ENCODE measurements at regions of chr6 and their contacts with region 1.

Region 1: DNA sequence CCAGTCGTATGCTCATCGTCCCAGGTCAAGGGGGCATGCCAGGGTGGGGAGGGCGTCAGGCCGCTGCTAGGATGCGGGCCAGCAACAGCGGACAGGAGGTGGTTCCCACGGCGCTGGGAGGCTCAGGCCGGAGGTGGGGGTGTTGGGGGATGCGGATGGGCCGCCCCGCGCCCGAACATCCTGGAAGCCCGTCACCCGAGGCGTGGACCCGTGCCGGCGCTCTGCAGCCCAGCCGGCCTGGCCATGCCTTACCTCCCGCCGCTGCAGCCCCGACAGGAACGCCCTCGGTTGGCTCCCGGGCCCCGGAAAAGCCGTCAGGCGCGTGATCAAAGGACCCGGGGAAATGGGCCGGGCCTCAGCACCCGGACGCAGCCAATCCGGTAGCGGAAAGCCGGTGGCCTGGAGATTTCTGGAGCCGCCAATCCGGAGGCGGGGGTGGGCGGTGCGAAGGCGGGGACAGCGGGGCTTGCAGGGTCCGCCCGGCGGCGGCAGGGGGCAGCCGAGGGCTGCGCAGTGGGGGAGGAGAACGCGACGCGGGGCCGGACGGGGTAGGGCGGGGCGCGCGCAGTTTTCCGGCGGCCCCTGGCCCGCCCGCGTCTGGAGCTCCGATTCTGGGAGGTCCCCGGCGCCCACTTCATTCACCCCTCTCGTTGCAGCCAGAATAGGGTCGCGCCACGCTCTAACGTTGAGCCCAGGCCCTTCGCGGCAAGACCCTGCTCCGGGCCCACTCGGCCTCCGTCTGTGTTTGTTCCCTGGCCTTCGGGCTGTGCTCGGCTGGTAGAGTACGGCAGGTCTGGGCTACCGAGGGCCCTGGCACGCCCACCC is at the start of gene SMIM29:
- DNase-seq: peak; percentile 96
- H3K4me3 Mint-ChIP-seq: peak within 1 kb of the TSS; percentile 87
- H3K27ac Mint-ChIP-seq: peak within 1 kb of the TSS; percentile 87
- H3K4me1 Mint-ChIP-seq: peaks cover 40% of the 10 kb centered on the region
- H3K27me3 Mint-ChIP-seq: peaks cover 1% of the 10 kb centered on the region
- total RNA-seq, gene SMIM29: 14.3 and 15.0 TPM in 2 replicates

Region 2: DNA sequence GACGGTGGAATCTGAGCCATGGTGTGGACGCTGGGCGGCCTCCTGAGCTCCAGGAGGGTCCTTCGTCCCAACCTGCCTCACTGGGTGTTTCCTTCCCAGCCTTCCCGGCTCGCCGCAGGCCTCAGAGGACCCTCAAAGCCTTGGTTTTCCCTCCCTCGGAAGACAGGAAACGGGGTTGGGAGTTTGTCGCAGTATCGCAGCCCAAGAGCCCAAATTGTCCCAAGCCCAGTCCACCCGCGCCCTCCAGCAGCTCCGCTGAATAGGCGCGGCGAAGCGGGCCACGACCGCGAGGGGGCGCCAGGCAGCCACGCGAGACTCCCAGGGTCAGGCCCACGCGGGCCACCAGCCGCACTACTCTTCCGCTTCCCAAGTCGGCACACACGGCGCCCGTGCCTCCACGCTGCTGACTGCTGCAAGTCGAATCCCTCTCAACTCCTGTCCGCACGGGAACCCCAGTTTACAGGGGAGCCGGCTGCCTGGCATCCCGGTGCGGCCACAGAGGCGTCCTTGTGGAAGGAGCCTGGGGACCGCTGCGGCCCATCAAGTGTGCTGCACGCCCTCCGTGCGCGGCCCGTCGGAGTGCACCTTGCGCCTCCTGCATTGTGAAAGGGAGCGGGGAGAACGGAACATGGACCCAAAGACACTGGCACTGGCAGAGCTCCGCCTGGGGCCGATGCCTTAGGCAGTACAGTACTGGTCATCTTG is 52.7 kb before region 1 on chr6:
- intact Hi-C with region 1: loop called (anchors 1 kb)
- DNase-seq: peak; percentile 83
- H3K4me3 Mint-ChIP-seq: peak overlapping the region; percentile 79
- H3K27ac Mint-ChIP-seq: peak overlapping the region; percentile 70
- H3K4me1 Mint-ChIP-seq: peaks cover 5% of the 10 kb centered on the region
- H3K27me3 Mint-ChIP-seq: peaks cover 10% of the 10 kb centered on the region

Region 3: GRCh38 chr6:34236131-34236996 is 12.6 kb before region 1 on chr6 and contains the start of gene HMGA1:
- intact Hi-C with region 1: loop called (anchors 1 kb)
- DNase-seq: peak; percentile 83
- H3K4me3 Mint-ChIP-seq: peak within 1 kb of the TSS; percentile 86
- H3K27ac Mint-ChIP-seq: peak within 1 kb of the TSS; percentile 92
- H3K4me1 Mint-ChIP-seq: peaks cover 43% of the 10 kb centered on the region
- H3K27me3 Mint-ChIP-seq: no peaks in the 10 kb centered on the region
- total RNA-seq, gene HMGA1: 415 and 438 TPM in 2 replicates

Region 4: GRCh38 chr6:34392497-34393190 is 143.7 kb after region 1 on chr6 and contains the start of gene NUDT3:
- intact Hi-C with region 1: loop called (anchors 1 kb)
- DNase-seq: peak; percentile 93
- H3K4me3 Mint-ChIP-seq: peak within 1 kb of the TSS; percentile 97
- H3K27ac Mint-ChIP-seq: peak within 1 kb of the TSS; percentile 88
- H3K4me1 Mint-ChIP-seq: peaks cover 18% of the 10 kb centered on the region
- H3K27me3 Mint-ChIP-seq: peaks cover 3% of the 10 kb centered on the region
- total RNA-seq, gene NUDT3: 20.0 and 20.8 TPM in 2 replicates

Region 5: GRCh38 chr6:34425498-34426410 is 176.8 kb after region 1 on chr6 and contains the start of gene RPS10:
- intact Hi-C with region 1: loop called (anchors 1 kb)
- DNase-seq: peak; percentile 88
- H3K4me3 Mint-ChIP-seq: peak within 1 kb of the TSS; percentile 99
- H3K27ac Mint-ChIP-seq: peak within 1 kb of the TSS; percentile 99
- H3K4me1 Mint-ChIP-seq: peaks cover 31% of the 10 kb centered on the region
- H3K27me3 Mint-ChIP-seq: peaks cover 4% of the 10 kb centered on the region
- total RNA-seq, gene RPS10: 1,492 and 1,525 TPM in 2 replicates

Region 6: DNA sequence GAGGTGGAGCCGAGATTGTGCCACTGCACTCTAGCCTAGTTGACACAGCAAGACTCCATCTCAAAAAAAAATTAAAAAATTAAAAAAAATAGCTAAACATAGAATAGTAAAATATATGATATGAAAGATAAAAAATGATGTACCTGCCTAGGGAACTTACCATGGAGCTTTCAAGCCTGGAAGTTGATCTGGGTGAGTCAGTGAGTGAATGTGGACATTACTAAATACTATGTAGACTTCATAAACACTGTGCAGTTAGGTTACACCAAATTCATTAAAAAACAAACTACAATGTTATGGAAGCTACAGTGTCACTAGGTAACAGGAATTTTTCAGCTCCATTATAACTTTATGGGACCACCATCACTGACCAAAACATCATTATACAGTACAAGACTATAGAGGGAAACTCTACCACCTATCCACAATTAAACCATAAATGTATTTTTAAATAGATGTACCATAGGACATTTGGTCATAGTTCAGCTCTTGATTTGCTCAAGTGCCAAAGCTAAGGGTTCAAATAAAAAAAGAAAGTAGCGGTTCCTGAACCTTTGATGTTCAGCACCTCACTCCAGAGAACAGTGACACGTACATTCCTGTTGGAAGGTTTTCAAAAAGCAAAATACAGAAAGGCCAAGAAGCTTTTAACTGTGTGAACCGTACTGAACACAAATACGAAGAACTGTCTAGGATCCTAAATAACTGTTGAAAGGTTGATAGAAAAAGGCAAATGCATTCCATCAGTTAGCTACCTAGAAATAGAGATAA is 359.6 kb after region 1 on chr6:
- intact Hi-C with region 1: loop called (anchors 1 kb)
- DNase-seq: no peak
- H3K4me3 Mint-ChIP-seq: no peak overlapping the region
- H3K27ac Mint-ChIP-seq: no peak overlapping the region
- H3K4me1 Mint-ChIP-seq: peaks cover 36% of the 10 kb centered on the region
- H3K27me3 Mint-ChIP-seq: no peaks in the 10 kb centered on the region